Naive thymus-derived CD4-positive, alpha-beta T cell (primary cell): ENCODE measurements at regions of chr4 and their contacts with region 1.

Region 1: GRCh38 chr4:986879-987623 is at the start of gene IDUA:
- DNase-seq: peak; percentile 75 to 90 (median 84)
- ATAC-seq: peak; percentile 93
- H3K4me3 ChIP-seq: peak within 1 kb of the TSS; percentile 82
- H3K4me3 Mint-ChIP-seq: peak within 1 kb of the TSS; percentile 87 to 95 (median 92)
- H3K27ac ChIP-seq: peak within 1 kb of the TSS; percentile 78
- H3K27ac Mint-ChIP-seq: peak within 1 kb of the TSS; percentile 76 to 90 (median 85)
- H3K4me1 ChIP-seq: peaks cover 19 to 21% of the 10 kb centered on the region in 2 donors
- H3K4me1 Mint-ChIP-seq: peaks cover 11 to 34% (median 22%) of the 10 kb centered on the region in 7 donors
- H3K27me3 ChIP-seq: no peaks in the 10 kb centered on the region
- H3K27me3 Mint-ChIP-seq: no peaks in the 10 kb centered on the region
- total RNA-seq, gene IDUA: 42.3 to 72.4 (median 65.8) TPM

Region 2: DNA sequence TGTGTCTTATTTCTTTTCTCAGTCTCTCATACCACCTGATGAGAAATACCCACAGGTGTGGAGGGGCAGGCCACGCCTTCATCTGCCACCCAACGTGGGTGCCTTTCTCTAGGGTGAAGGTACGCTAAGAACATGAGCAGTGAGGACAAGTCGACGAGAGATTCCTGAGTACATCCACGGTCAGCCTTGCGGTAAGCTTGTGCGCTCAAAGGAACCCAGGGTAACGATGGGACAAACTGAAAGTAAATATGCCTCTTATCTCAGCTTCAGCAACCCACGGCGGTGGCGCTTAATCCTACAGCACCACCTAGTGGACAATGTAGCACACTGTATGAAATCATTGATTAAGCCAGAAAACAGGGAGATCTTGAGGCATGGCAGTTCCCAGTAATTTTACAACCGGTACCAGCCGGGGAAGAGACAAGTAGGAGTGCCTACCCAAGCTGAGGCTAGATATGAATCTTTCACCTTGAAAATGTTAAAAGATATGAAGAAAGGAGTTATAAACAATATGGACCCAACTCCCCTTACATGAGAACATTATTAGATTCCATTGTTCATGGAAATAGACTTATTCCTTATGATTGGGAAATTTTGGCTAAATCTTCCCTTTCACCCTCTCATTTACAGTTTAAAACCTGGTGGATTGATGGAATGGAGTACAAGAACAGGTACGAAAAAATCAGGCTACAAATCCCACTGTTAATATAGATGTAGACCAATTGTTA is 744.8 kb before region 1 on chr4:
- CTCF ChIA-PET with region 1: no interaction called
- POLR2A ChIA-PET with region 1: no interaction called
- intact Hi-C with region 1: loop called in 1 of 2 experiments (anchors 10 kb)
- DNase-seq: peak; percentile 43 to 80 (median 71)
- ATAC-seq: peak; percentile 100
- H3K4me3 ChIP-seq: peak overlapping the region; percentile 72
- H3K4me3 Mint-ChIP-seq: peak overlapping the region; percentile 66 to 95 (median 90)
- H3K27ac ChIP-seq: peak overlapping the region; percentile 58
- H3K27ac Mint-ChIP-seq: peak overlapping the region; percentile 80 to 89 (median 85)
- H3K4me1 ChIP-seq: no peaks in the 10 kb centered on the region
- H3K4me1 Mint-ChIP-seq: peaks cover 10 to 13% (median 11%) of the 10 kb centered on the region in 7 donors
- H3K27me3 ChIP-seq: no peaks in the 10 kb centered on the region
- H3K27me3 Mint-ChIP-seq: no peaks in the 10 kb centered on the region

Region 3: GRCh38 chr4:337143-337931 is 649.7 kb before region 1 on chr4 and contains the start of gene ZNF141:
- CTCF ChIA-PET with region 1: no interaction called
- POLR2A ChIA-PET with region 1: no interaction called
- intact Hi-C with region 1: loop called in 1 of 2 experiments (anchors 2 kb)
- DNase-seq: peak; percentile 74 to 95 (median 93)
- ATAC-seq: peak; percentile 93
- H3K4me3 ChIP-seq: peak within 1 kb of the TSS; percentile 91
- H3K4me3 Mint-ChIP-seq: peak within 1 kb of the TSS; percentile 93 to 100 (median 99)
- H3K27ac ChIP-seq: peak within 1 kb of the TSS; percentile 85
- H3K27ac Mint-ChIP-seq: peak within 1 kb of the TSS; percentile 95 to 100 (median 99)
- H3K4me1 ChIP-seq: peaks cover 9 to 10% of the 10 kb centered on the region in 2 donors
- H3K4me1 Mint-ChIP-seq: peaks cover 11 to 46% (median 41%) of the 10 kb centered on the region in 7 donors
- H3K27me3 ChIP-seq: no peaks in the 10 kb centered on the region
- H3K27me3 Mint-ChIP-seq: peaks cover 0 to 6% (median 0%) of the 10 kb centered on the region in 5 donors
- total RNA-seq, gene ZNF141: 19.7 to 76.1 (median 29.0) TPM

Region 4: DNA sequence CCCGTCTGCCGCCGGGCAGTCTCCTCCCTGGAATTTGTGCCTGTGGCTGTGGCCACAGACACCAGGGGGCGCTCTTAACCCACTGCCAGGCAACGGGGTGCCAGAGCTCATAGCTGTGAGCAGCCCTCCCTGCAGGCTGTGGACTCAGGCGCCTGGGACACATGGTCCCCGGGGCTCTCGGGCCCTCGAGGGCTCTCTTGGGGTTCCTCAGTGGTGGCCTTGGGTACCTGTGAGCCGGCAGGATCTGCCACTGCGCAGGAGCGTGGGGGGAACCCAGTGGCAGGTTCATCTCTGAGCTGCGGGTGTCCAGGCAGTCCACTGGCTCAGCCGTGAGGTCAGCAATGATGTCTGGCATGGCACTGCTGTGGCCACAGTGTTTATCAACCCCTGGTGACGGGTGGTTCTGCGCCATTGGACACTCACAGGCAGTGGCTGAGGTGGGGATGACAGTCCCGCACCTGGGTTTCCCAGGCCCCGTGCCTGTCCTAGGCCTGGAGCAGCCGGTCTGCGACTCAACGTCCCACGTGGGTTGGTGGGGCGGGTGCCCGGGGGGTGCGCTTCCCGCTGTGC is 244.2 kb before region 1 on chr4:
- CTCF ChIA-PET with region 1: interaction called, 19 read pairs
- POLR2A ChIA-PET with region 1: interaction called, 5 read pairs
- intact Hi-C with region 1: loop called (anchors 2 kb)
- DNase-seq: peak; percentile 47 to 80 (median 69)
- ATAC-seq: peak; percentile 93
- H3K4me3 ChIP-seq: no peak overlapping the region
- H3K4me3 Mint-ChIP-seq: no peak overlapping the region
- H3K27ac ChIP-seq: no peak overlapping the region
- H3K27ac Mint-ChIP-seq: peak overlapping the region in 1 of 9 donors; percentile 41
- H3K4me1 ChIP-seq: no peaks in the 10 kb centered on the region
- H3K4me1 Mint-ChIP-seq: peaks cover 0 to 6% (median 2%) of the 10 kb centered on the region in 7 donors
- H3K27me3 ChIP-seq: no peaks in the 10 kb centered on the region
- H3K27me3 Mint-ChIP-seq: no peaks in the 10 kb centered on the region

Region 5: GRCh38 chr4:876780-877179 is 110.3 kb before region 1 on chr4:
- CTCF ChIA-PET with region 1: no interaction called
- POLR2A ChIA-PET with region 1: no interaction called
- intact Hi-C with region 1: loop called (anchors 1 kb)
- DNase-seq: no peak
- ATAC-seq: no peak
- H3K4me3 ChIP-seq: no peak overlapping the region
- H3K4me3 Mint-ChIP-seq: peak overlapping the region in 1 of 10 donors; percentile 34
- H3K27ac ChIP-seq: no peak overlapping the region
- H3K27ac Mint-ChIP-seq: peak overlapping the region in 3 of 9 donors; percentile 28 to 76 (median 38)
- H3K4me1 ChIP-seq: peaks cover 15 to 21% of the 10 kb centered on the region in 2 donors
- H3K4me1 Mint-ChIP-seq: peaks cover 22 to 35% (median 28%) of the 10 kb centered on the region in 7 donors
- H3K27me3 ChIP-seq: no peaks in the 10 kb centered on the region
- H3K27me3 Mint-ChIP-seq: no peaks in the 10 kb centered on the region

Region 6: DNA sequence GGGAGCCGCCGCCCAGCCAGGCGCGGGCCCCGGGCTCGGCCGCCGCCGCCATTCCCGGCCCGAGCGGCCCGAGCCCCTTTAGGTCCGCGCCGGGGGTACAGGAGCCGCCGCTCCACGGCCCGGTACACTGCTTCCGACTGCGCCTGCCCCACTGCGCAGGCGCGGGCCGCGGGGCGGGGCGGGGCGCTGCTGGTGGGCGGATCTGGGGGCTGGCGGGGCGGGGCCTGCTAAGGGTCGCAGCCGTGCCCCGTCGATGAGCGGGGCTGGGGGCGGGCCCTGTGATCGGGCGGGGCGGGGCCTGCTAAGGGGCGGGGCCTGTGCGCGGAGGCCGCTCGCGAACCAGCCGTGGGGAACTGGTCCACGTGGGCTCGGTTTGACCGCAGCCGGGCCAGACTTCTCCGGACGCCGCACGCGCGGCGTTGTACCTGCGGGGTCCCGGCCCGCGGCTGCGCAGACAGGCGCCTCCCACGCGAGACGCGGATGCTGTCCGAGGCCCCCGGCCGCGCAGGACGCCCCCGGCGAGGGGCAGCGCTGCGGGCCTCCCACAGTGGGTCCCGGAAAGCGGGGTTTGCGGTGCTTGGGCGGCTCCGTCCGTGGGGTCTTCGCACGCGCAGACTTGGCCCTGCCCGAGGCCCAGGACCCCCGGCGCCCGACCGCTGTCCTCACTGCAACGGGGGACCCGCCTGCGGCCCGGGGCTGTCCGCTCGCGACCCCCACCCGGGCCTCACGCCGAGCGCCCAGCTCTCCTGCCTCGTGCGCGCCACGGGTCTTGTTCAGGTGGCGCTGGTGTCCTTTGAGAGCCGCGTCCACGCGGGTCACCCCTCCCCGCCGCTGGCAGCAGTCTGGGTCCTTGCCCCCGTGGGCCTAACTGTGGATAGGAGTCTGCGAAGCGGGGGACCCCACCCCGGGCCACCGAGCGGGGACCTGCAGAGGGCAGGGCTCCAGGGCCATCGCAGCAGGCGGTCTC is 13.3 kb before region 1 on chr4 and contains the start of gene DGKQ:
- CTCF ChIA-PET with region 1: interaction called, 3 read pairs
- POLR2A ChIA-PET with region 1: no interaction called
- intact Hi-C with region 1: loop called (anchors 1 kb)
- DNase-seq: peak; percentile 68 to 93 (median 83)
- ATAC-seq: peak; percentile 96
- H3K4me3 ChIP-seq: peak within 1 kb of the TSS; percentile 56
- H3K4me3 Mint-ChIP-seq: peak within 1 kb of the TSS; percentile 19 to 75 (median 56)
- H3K27ac ChIP-seq: peak within 1 kb of the TSS; percentile 72
- H3K27ac Mint-ChIP-seq: no peak within 1 kb of the TSS
- H3K4me1 ChIP-seq: peaks cover 13 to 26% of the 10 kb centered on the region in 2 donors
- H3K4me1 Mint-ChIP-seq: peaks cover 0 to 17% (median 10%) of the 10 kb centered on the region in 7 donors
- H3K27me3 ChIP-seq: no peaks in the 10 kb centered on the region
- H3K27me3 Mint-ChIP-seq: no peaks in the 10 kb centered on the region
- total RNA-seq, gene DGKQ: 14.9 to 28.0 (median 22.7) TPM

Region 7: DNA sequence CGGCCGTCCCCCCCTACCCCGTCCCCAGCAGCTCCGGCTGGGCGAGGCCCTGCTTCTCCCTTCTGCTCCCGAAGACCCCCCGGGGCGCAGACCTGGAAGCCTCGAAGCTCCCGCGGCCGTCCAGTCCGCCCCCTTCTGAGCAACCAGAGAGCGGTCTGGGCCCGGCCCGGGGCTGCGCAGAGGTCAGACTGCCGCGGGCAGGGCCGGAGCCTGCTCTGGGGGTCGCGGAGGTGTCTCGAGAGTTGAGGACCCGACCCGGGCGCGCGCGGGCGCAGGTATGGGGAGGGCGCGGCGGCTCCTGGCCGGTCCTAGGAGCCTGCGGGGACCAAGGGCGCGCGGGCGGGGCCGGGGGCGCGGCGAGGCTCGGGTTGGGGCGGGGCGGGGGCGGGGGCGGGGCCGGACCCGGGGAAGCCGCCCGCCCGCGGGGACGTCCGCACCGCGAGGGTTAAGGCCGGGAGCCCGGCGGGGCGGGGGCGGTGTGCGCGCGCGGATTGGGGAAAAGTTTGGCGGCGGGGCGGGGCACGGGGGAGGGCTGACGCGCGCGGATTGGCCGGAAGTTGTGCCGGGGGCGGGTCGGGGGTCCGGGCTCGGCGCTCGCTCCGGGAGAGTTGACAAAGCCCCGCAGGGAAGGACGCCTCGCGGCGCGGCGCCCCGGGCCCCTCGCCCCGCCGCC is 24.1 kb after region 1 on chr4 and contains the start of gene FGFRL1:
- CTCF ChIA-PET with region 1: no interaction called
- POLR2A ChIA-PET with region 1: no interaction called
- intact Hi-C with region 1: loop called (anchors 1 to 2 kb)
- DNase-seq: peak; percentile 78 to 95 (median 87)
- ATAC-seq: peak; percentile 78
- H3K4me3 ChIP-seq: peak within 1 kb of the TSS; percentile 77
- H3K4me3 Mint-ChIP-seq: peak within 1 kb of the TSS; percentile 86 to 97 (median 89)
- H3K27ac ChIP-seq: peak within 1 kb of the TSS; percentile 83
- H3K27ac Mint-ChIP-seq: peak within 1 kb of the TSS; percentile 76 to 96 (median 92)
- H3K4me1 ChIP-seq: peaks cover 0 to 10% of the 10 kb centered on the region in 2 donors
- H3K4me1 Mint-ChIP-seq: peaks cover 15 to 21% (median 18%) of the 10 kb centered on the region in 7 donors
- H3K27me3 ChIP-seq: no peaks in the 10 kb centered on the region
- H3K27me3 Mint-ChIP-seq: peaks cover 24 to 31% (median 27%) of the 10 kb centered on the region in 5 donors
- total RNA-seq, gene FGFRL1: 10.6 to 28.1 (median 22.0) TPM

Region 8: GRCh38 chr4:1567803-1568581 is 580.9 kb after region 1 on chr4:
- CTCF ChIA-PET with region 1: no interaction called
- POLR2A ChIA-PET with region 1: no interaction called
- intact Hi-C with region 1: no loop called
- DNase-seq: no peak
- ATAC-seq: no peak
- H3K4me3 ChIP-seq: no peak overlapping the region
- H3K4me3 Mint-ChIP-seq: no peak overlapping the region
- H3K27ac ChIP-seq: no peak overlapping the region
- H3K27ac Mint-ChIP-seq: no peak overlapping the region
- H3K4me1 ChIP-seq: no peaks in the 10 kb centered on the region
- H3K4me1 Mint-ChIP-seq: peaks cover 2 to 8% (median 4%) of the 10 kb centered on the region in 7 donors
- H3K27me3 ChIP-seq: peaks cover 0 to 5% of the 10 kb centered on the region in 2 donors
- H3K27me3 Mint-ChIP-seq: peaks cover 0 to 13% (median 0%) of the 10 kb centered on the region in 5 donors